Head of caudate nucleus (tissue), 42 donors: ENCODE measurements at regions of chr1 and their contacts with region 1.

Region 1: DNA sequence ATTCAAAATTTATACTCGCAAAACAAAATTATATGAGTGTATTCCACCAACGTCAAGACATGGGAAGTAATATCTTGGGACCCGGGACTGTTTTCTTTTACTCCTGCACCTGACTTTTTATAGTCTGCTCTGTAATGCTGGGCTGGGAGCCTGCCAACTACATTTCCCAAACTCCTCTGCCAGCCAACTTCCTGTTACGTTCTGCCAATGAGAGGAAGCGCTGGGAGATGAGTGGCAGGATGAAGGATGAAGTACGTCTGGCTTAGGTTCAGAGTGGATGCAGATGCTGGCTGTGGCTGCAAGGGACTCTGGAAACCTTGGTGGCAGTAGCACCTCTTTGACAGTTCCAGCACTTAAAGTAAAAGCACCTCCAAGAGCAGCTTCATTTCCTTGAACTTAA is 59.6 kb downstream of the USP24 start:
- DNase-seq: peak; percentile 12 to 87 (median 69)

Region 2: GRCh38 chr1:54835970-54836369 is 319.5 kb before region 1 on chr1:
- intact Hi-C with region 1: no loop called
- DNase-seq: peak in 3 of 42 donors; percentile 14 to 33 (median 21)

Region 3: GRCh38 chr1:55215256-55216021 is 59.9 kb after region 1 on chr1 and contains the start of gene USP24:
- intact Hi-C with region 1: loop called (anchors 10 kb)
- DNase-seq: peak; percentile 17 to 91 (median 78)

Region 4: DNA sequence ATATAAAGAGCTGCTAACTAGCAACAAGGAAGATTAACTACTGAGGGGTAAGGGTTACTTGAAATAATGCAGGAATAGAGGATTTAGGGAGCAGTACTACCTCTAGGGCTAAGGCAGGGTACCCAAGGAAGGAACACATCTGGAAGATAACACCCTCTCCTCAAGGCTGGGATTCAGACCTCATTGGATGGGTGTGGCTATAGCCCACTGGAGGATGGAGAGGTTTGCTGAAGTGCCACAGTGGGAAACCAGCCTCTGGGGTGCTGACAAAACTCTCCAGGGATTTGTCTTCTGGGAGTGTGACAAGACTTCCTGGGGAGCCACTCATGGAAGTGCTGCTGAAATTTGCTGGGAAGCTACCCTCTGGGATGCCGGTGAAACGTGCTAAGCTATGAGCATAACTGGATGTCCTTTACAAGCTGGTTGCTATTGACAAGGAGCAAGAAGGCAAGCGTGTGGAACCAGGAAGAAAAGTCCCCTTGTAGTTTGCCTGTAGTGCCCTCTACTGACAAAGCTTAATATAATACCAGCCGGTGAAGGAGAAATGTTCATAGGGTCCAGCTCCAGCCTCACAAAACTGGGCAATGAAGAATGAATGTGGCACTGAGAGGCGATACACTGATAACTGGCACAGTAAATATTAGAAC is 182.4 kb after region 1 on chr1:
- intact Hi-C with region 1: no loop called
- DNase-seq: peak in 5 of 42 donors; percentile 10 to 50 (median 23)

Region 5: DNA sequence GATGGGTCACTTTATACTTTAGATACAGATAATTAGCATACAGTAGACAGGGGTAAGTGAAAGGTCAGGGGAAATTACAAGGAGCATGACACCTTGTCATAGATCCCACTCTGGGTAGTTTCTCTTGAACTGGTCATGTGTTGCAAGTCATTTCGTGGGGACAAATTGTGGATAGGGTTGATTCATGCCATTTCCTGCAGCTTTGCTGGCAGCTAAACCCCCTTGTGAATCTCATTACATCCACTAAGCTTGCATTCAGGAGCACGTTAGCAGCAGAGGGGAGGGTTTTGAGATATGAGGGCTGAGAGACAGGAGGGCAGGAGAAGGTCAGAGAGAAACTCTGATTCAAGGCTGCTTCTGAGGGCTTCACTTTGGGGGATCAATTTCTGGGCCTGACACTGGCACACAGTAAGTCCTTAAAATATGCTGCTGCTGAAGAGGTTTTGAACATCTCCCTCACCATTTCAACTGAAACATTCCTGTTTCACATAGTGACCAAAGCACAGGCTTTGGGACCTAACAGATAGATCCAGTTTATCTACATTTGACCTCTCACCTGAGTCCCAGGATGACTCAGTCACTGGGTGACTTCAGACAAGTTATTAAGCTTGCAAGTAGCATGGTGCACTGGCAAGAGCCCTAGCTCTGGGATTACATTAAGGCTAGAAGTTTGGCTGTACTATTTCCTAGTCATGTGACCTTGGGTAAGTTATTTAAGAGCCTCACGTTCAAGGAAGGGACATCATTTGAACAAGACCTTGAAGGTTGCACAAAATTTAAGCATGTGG is 265.6 kb after region 1 on chr1:
- intact Hi-C with region 1: no loop called
- DNase-seq: no peak